H1 (cell line): ENCODE measurements at regions of chr1 and their contacts with region 1.

Region 1: GRCh38 chr1:244634546-244634945 is 18.4 kb upstream of the DESI2 start:
- DNase-seq: no peak
- H3K4me3 ChIP-seq: no peak overlapping the region
- H3K27ac ChIP-seq: no peak overlapping the region
- H3K4me1 ChIP-seq: peaks cover 0 to 3% (median 2%) of the 10 kb centered on the region in 4 experiments; a peak in 2 of 7 replicates
- H3K27me3 ChIP-seq: no peaks in the 10 kb centered on the region
- CTCF ChIP-seq: no peak
- EP300 ChIP-seq: no peak
- POLR2A ChIP-seq: no peak
- RAD21 ChIP-seq: no peak

Region 2: GRCh38 chr1:244652699-244653466 is 18.3 kb after region 1 on chr1 and contains the start of gene DESI2:
- CTCF ChIA-PET with region 1: interaction called, 14 read pairs
- POLR2A ChIA-PET with region 1: interaction called, 4 read pairs
- DNase-seq: peak; percentile 95 to 98
- H3K4me3 ChIP-seq: peak within 1 kb of the TSS; percentile 76 to 89 (median 88)
- H3K27ac ChIP-seq: peak within 1 kb of the TSS; percentile 74
- H3K4me1 ChIP-seq: peaks cover 2 to 14% (median 11%) of the 10 kb centered on the region in 4 experiments; a peak in 6 of 7 replicates
- H3K27me3 ChIP-seq: no peaks in the 10 kb centered on the region
- CTCF ChIP-seq: peak; percentile 3 to 38 (median 31); a peak in 3 of 4 replicates
- EP300 ChIP-seq: no peak
- POLR2A ChIP-seq: peak; percentile 87 to 93
- RAD21 ChIP-seq: peak; percentile 31 to 32; a peak in 3 of 4 replicates
- total RNA-seq, gene DESI2: 105 and 110 TPM in 2 replicates